ENCODE measurements at regions of chr1 and their contacts with region 1.

Region 1: DNA sequence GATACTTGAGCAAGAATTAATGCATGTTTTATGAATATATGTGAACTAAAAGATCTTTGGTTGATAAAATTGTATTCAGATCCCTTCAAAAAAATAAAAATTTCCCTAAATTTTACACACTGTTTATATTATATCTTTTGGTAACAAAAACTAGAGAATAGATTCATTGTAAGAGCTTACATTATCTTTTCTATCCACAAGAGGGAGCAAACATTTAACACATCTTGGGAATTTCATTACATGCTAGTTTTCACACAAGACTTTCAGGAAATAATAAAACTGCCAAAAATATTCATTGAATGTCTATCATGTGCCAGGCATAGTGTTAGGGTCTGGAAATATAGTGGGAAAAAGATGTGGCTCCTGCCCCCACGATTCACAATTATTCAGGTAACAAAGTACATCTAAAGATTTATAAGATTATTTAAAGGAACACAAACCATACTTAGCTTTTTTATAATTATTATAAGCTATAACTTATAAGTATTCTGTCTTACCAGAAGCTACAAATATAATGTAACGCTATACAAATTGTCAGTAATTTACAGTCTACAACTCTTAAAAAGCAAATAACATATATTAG is 30.6 kb downstream of the FAF1 start:
- DNase-seq: no peak
- CTCF ChIP-seq: peak; percentile 36

Region 2: GRCh38 chr1:50873458-50874187 is 55.8 kb before region 1 on chr1:
- CTCF ChIA-PET with region 1: interaction called, 17 read pairs
- POLR2A ChIA-PET with region 1: no interaction called
- DNase-seq: peak; percentile 62
- CTCF ChIP-seq: peak; percentile 76

Region 3: DNA sequence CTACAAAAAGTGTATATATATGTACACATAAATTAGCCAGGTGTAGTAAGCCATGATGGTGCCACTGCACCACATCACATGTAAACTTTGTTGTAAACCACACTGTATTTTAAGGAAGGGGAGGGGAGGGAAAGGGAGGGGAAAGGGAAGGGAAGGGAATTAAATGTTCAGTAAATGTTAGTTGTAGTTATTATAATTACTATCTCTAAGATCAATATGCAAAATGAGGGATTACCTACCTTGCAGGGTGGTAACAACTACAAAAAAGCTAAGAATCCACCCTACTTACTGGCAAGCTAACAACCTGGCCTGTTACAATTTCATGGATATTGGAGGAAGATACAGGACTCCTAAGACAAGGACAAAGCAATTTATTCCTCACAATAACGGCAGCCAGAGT is 12.9 kb after region 1 on chr1:
- CTCF ChIA-PET with region 1: interaction called, 21 read pairs
- POLR2A ChIA-PET with region 1: no interaction called
- DNase-seq: no peak
- CTCF ChIP-seq: no peak

Region 4: DNA sequence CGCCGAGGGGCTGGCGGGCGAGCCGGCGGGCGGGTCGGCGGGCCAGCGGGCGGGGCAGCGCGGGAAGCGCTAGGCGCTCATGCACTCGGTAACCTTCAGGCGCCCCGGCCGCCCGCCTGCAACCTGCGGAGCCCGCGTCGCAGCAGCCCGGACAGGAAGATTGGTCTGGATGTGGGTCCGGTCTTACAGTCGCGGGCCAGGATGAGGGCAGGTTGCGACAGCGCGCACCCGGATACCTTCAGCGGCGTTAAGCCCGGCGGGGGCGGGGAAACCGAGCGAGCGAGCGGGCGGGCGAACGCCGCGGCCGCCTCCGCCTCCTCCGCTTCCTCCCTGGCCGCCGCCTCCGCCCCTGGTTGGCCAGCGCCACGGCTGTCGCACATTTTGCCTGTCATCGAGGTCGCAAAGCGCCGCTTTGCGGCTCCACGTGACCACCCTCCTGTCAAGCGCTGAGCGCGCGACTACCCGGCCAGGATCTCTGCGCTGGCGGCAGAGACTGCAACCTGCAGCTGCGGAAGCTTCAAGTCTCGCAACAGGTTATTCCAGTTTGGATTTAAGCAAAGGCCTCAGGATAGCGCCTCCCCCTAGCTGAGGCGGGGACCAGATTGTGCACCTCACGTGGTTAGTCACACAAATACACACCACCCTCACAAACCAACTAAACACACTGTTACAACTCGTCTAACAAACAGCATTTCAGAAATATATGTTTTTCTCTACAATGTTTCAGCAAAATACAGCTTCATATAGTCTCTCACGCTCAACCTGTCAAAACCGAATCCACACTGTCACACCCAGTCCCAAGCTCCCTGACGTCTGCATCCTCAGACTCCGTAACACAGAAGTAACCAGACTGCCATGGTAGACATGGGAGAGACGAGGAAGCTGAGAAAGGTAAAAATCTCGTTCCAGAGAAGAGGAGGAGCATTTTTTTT is 30.7 kb after region 1 on chr1 and contains the start of gene FAF1:
- CTCF ChIA-PET with region 1: interaction called, 12 read pairs
- POLR2A ChIA-PET with region 1: interaction called, 5 read pairs
- DNase-seq: peak; percentile 95
- CTCF ChIP-seq: no peak

Region 5: GRCh38 chr1:50968158-50968820 is 38.8 kb after region 1 on chr1:
- CTCF ChIA-PET with region 1: interaction called, 11 read pairs
- POLR2A ChIA-PET with region 1: no interaction called
- DNase-seq: peak; percentile 88
- CTCF ChIP-seq: peak; percentile 44